GM10248 (cell line): ENCODE measurements at regions of chr1 and their contacts with region 1.

Region 1: GRCh38 chr1:117534995-117535467 is 70.8 kb upstream of the TENT5C start:
- DNase-seq: peak; percentile 55
- CTCF ChIP-seq: peak; percentile 53

Region 2: DNA sequence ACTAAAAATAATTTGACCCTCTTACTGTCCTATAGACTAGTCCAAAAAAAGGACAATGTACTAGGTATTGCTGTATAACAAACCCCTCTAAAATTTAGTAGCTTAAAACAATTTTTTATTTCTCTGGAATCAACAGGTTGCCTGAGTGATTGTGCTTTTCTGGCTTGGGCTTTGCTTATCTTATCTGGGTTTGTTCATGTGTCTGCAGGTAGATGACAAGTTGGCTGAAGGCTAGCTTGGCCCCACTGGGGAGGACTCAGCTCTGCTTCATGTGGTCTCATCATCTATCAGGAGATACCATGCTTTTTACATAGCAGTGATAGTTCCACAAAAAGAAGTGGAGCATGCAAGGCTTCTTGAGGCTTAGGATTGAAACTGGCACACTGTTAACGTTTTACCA is 53.6 kb before region 1 on chr1:
- CTCF ChIA-PET with region 1: interaction called, 11 read pairs
- POLR2A ChIA-PET with region 1: no interaction called
- DNase-seq: no peak
- CTCF ChIP-seq: no peak

Region 3: GRCh38 chr1:117562581-117563520 is 27.8 kb after region 1 on chr1:
- CTCF ChIA-PET with region 1: interaction called, 21 read pairs
- POLR2A ChIA-PET with region 1: no interaction called
- DNase-seq: no peak
- CTCF ChIP-seq: no peak

Region 4: DNA sequence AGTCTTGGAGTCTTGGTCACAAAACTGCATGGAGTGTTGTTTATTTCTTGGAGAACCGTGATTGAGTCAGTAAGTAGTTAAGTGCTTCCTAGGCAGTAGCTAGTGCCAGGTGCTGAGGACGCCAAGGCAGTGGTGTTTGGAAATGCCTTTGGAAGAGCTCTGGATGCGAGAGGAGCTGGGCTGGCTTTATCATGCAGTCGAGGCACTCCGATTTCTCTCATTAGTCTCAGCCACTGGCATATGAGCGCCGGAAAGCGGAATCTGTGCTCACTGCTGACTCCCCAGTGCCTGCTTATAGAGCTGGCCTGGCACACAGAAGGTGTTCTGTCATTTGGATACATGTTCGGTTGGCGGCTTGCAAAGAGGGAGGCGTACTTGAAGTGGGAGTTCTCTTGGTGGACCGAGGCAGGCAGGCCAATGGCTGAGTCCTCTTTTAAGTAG is 74.5 kb after region 1 on chr1:
- CTCF ChIA-PET with region 1: interaction called, 10 read pairs
- POLR2A ChIA-PET with region 1: no interaction called
- DNase-seq: no peak
- CTCF ChIP-seq: no peak

Region 5: DNA sequence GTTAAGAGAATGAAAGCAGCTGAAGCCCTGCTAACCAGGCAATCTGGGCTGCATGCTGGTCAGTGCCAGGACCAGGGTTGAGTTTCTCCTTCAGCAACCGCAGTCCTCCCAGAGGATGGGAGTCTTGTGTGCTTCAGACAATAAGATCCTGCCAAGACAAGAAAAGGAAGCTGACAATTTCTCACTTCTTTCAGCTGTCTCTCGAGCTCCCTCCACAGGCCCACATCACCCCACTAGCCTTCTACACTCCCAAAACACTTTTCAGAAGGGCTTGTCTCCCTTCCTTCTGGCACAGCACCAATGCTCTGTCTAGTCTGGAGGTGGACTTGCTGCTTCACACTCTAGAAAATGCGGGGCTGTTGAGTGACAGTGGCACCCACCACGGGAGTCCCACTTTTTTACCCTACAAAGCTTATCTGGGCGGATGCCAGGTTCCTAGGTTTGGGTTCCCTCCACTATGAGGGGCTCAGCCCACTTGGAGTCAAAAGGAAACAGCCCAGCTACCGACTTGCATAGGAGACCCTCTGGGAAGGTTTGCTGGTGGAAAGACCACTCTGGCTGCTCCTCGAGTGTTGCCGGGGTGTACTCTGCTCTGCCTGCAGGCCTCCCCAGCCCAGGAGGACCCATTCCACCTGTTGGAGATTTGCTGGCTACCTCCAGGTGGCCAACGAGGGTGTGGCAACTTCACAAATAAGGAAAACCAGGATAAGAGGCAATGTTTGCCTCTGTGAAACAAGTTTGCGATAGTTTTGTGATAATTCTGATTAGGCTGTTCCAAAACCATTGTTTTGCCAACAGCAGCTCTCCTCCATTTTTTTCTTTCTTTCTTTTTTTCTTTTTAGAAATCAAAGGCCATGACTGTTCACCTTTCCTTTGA is 139.7 kb after region 1 on chr1:
- CTCF ChIA-PET with region 1: interaction called, 105 read pairs
- POLR2A ChIA-PET with region 1: no interaction called
- DNase-seq: peak; percentile 75
- CTCF ChIP-seq: peak; percentile 74

Region 6: GRCh38 chr1:117758444-117759316 is 223.6 kb after region 1 on chr1:
- CTCF ChIA-PET with region 1: interaction called, 72 read pairs
- POLR2A ChIA-PET with region 1: no interaction called
- DNase-seq: peak; percentile 75
- CTCF ChIP-seq: peak; percentile 75

Region 7: DNA sequence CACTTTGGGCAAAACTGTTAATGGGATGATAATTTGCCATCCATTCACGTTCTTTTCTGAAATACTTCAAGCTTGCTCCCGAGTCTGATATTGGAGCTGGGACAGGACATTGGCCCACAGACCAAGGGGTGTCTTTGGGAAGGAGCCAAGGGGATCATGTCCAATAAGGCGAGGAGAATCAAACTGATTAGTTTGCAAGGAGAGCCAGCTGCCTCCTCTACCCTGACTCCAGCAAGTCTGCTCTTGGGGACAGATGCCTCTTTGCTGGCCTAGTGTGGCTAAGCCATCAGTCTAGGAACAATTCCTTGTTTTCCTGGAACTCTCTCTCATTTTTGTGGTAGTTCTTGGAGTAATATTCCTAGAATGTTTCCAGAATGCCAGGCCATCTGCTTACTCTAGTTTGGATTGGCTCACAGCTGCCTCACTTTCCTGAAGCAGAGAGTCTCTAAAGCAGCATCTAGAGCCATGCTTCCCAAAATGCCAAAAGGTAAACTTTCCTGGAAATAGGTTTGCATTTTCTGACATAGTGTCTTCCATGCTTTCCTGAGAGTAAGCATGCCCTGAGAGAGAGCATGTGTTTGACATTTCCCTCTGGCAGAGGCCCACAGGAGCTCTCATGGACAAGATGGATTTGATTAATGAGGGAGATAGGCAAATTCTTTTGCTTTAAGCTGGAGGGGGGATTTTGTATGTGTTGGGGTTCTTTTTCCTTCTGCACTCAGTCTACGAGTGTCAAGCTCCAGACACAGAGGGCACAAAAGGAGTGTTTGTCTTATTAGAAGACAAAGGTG is 248.8 kb after region 1 on chr1:
- CTCF ChIA-PET with region 1: no interaction called
- POLR2A ChIA-PET with region 1: no interaction called
- DNase-seq: no peak
- CTCF ChIP-seq: no peak

Region 8: GRCh38 chr1:117871013-117871412 is 336.0 kb after region 1 on chr1:
- CTCF ChIA-PET with region 1: no interaction called
- POLR2A ChIA-PET with region 1: no interaction called
- DNase-seq: no peak
- CTCF ChIP-seq: no peak